ENCODE measurements at regions of chr6 and their contacts with region 1.

Region 1: DNA sequence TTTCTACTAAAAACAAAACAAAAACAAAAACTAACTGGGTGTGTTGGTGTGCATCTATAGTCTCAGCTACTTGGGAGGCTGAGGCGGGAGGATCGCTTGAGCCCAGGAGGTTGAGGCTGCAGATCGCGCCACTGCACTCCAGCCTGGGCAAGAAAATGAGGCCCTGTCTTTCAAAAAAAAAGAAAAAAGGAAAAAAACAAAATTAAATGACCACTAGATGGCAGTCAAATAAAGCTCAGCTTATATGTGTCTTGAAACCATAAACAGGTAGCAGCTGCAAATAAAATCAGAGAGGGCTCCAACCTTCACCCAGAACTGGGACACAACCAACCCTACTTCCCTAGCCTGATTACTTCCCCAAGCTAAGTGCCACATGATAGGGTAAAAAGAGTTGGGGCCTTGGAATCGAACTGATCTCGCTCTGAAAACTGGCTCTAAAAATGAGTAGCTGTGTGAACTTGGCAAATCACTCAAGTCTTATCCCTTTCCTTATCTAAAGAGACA is 67.1 kb upstream of the ADGRF4 start:
- DNase-seq: peak in 1 of 3 donors; percentile 46
- ATAC-seq: peak; percentile 70 to 71
- H3K4me3 ChIP-seq: no peak overlapping the region
- H3K27ac ChIP-seq: no peak overlapping the region
- H3K4me1 ChIP-seq: peaks cover 6% of the 10 kb centered on the region
- H3K27me3 ChIP-seq: no peaks in the 10 kb centered on the region

Region 2: GRCh38 chr6:47733879-47734558 is 102.7 kb after region 1 on chr6:
- intact Hi-C with region 1: loop called in 3 of 4 experiments (anchors 2 to 5 kb)
- DNase-seq: no peak
- ATAC-seq: no peak
- H3K4me3 ChIP-seq: no peak overlapping the region
- H3K27ac ChIP-seq: no peak overlapping the region
- H3K4me1 ChIP-seq: peaks cover 8% of the 10 kb centered on the region
- H3K27me3 ChIP-seq: no peaks in the 10 kb centered on the region